CD4-positive, alpha-beta T cell (primary cell): ENCODE measurements at regions of chr21 and their contacts with region 1.

Region 1: GRCh38 chr21:29477941-29478340 is 179.2 kb downstream of the BACH1 start:
- DNase-seq: no peak
- ATAC-seq: no peak
- H3K4me3 ChIP-seq: no peak overlapping the region
- H3K4me3 Mint-ChIP-seq: no peak overlapping the region
- H3K27ac ChIP-seq: no peak overlapping the region
- H3K27ac Mint-ChIP-seq: no peak overlapping the region
- H3K4me1 ChIP-seq: peaks cover 3% of the 10 kb centered on the region
- H3K4me1 Mint-ChIP-seq: peaks cover 31% of the 10 kb centered on the region
- H3K27me3 ChIP-seq: no peaks in the 10 kb centered on the region
- H3K27me3 Mint-ChIP-seq: no peaks in the 10 kb centered on the region
- CTCF ChIP-seq: no peak

Region 2: DNA sequence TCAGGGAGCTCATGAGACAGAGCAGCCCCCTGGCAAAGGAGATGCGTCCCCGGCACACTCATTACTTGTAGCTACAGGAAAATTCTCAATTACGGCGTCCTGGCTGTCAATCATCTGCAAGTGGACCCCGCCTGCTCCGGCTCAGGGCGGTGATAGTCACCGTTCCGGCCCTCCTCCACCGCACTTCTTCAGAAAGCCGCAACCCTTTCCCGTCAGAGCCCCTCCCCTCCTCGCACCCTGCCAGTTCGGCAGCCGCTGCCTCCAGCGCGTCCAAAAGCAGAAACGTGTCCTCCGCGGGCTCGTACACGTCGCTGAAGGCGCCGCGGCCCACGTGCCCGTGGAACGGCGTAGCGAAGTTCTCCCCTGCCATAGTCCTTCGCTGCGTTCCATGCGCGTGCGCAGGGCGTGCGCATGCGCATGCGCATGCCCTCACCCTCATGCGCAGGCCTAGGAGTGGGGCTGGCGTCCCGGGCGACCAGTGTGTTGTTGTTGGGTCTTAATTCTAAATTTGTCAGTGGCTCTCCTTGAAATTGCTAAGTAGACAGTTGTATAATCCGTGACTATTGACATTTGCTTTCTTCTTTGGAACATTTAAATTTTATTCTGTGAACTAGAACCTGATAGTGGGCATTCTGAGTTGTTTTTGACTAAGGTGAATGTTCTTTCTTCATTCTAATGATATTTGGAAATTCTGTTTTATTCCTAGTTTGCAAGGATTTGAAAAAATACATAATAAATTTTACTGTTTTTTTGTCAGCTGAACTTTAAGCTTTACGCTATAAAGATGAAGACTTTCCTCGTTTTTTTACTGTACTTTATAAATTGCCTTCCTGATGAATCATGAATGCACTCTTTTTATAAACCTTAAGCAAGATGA is 592.7 kb before region 1 on chr21:
- CTCF ChIA-PET with region 1: no interaction called
- POLR2A ChIA-PET with region 1: no interaction called
- intact Hi-C with region 1: loop called in 1 of 2 experiments (anchors 5 kb)
- DNase-seq: peak; percentile 81 to 98 (median 90)
- ATAC-seq: peak; percentile 94
- H3K4me3 ChIP-seq: peak overlapping the region; percentile 62
- H3K4me3 Mint-ChIP-seq: peak overlapping the region; percentile 93
- H3K27ac ChIP-seq: peak overlapping the region; percentile 88 to 91
- H3K27ac Mint-ChIP-seq: peak overlapping the region; percentile 97
- H3K4me1 ChIP-seq: peaks cover 11% of the 10 kb centered on the region
- H3K4me1 Mint-ChIP-seq: peaks cover 23% of the 10 kb centered on the region
- H3K27me3 ChIP-seq: no peaks in the 10 kb centered on the region
- H3K27me3 Mint-ChIP-seq: no peaks in the 10 kb centered on the region
- CTCF ChIP-seq: no peak

Region 3: DNA sequence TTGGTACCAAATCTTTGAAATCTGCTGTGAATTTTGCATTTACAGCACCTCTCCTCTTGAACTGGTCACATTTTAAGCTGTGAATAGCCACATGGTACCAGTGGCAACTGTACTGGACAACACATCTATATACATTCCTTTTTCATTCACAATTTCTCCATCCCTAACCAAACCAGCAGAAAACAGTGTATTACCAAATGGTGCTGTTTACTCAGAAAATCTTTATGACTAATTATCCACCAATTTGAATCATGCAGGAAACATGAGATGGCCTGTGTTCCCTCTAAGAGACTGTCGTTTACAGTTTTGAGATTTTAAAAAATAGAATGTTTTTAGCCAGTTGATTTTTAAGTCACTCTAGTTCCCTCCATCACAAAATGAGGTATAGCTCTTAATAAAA is 386.9 kb before region 1 on chr21:
- CTCF ChIA-PET with region 1: no interaction called
- POLR2A ChIA-PET with region 1: no interaction called
- intact Hi-C with region 1: loop called in 1 of 2 experiments (anchors 10 kb)
- DNase-seq: no peak
- ATAC-seq: no peak
- H3K4me3 ChIP-seq: no peak overlapping the region
- H3K4me3 Mint-ChIP-seq: no peak overlapping the region
- H3K27ac ChIP-seq: no peak overlapping the region
- H3K27ac Mint-ChIP-seq: no peak overlapping the region
- H3K4me1 ChIP-seq: no peaks in the 10 kb centered on the region
- H3K4me1 Mint-ChIP-seq: no peaks in the 10 kb centered on the region
- H3K27me3 ChIP-seq: no peaks in the 10 kb centered on the region
- H3K27me3 Mint-ChIP-seq: no peaks in the 10 kb centered on the region
- CTCF ChIP-seq: no peak

Region 4: GRCh38 chr21:29418813-29419212 is 59.1 kb before region 1 on chr21:
- CTCF ChIA-PET with region 1: no interaction called
- POLR2A ChIA-PET with region 1: no interaction called
- intact Hi-C with region 1: loop called in 1 of 2 experiments (anchors 5 kb)
- DNase-seq: no peak
- ATAC-seq: no peak
- H3K4me3 ChIP-seq: no peak overlapping the region
- H3K4me3 Mint-ChIP-seq: no peak overlapping the region
- H3K27ac ChIP-seq: no peak overlapping the region
- H3K27ac Mint-ChIP-seq: peak overlapping the region; percentile 6
- H3K4me1 ChIP-seq: no peaks in the 10 kb centered on the region
- H3K4me1 Mint-ChIP-seq: peaks cover 9% of the 10 kb centered on the region
- H3K27me3 ChIP-seq: no peaks in the 10 kb centered on the region
- H3K27me3 Mint-ChIP-seq: no peaks in the 10 kb centered on the region
- CTCF ChIP-seq: no peak

Region 5: DNA sequence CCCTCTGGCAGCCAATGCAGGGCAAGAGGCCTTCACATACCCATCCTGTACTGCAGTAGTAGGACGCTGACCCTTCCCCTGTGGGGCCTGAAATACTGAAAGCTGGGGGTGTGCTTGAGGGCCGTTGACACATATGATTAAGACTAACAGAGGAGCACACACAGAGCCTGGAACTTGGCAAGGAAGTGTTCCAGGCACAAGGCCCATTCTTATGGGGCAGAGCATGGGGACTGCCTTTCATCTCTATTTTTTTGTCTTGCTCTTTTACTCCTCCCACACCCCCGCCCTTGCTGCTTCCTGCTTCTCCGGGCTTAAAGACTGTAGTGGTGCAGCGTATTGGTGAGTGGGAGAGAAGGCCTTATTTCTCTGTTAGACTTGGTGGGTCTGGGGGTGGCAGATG is 41.8 kb before region 1 on chr21:
- CTCF ChIA-PET with region 1: no interaction called
- POLR2A ChIA-PET with region 1: interaction called, 3 read pairs
- intact Hi-C with region 1: loop called in 1 of 2 experiments (anchors 5 kb)
- DNase-seq: peak in 13 of 14 experiments; percentile 23 to 71 (median 47)
- ATAC-seq: peak; percentile 94
- H3K4me3 ChIP-seq: peak overlapping the region; percentile 44
- H3K4me3 Mint-ChIP-seq: peak overlapping the region; percentile 76
- H3K27ac ChIP-seq: peak overlapping the region; percentile 37 to 41
- H3K27ac Mint-ChIP-seq: peak overlapping the region; percentile 83
- H3K4me1 ChIP-seq: peaks cover 16% of the 10 kb centered on the region
- H3K4me1 Mint-ChIP-seq: peaks cover 57% of the 10 kb centered on the region
- H3K27me3 ChIP-seq: no peaks in the 10 kb centered on the region
- H3K27me3 Mint-ChIP-seq: no peaks in the 10 kb centered on the region
- CTCF ChIP-seq: no peak

Region 6: GRCh38 chr21:29449306-29449950 is 28.5 kb before region 1 on chr21:
- CTCF ChIA-PET with region 1: no interaction called
- POLR2A ChIA-PET with region 1: interaction called, 22 read pairs
- intact Hi-C with region 1: no loop called
- DNase-seq: peak in 5 of 14 experiments; percentile 11 to 87 (median 63)
- ATAC-seq: peak; percentile 86
- H3K4me3 ChIP-seq: peak overlapping the region; percentile 1
- H3K4me3 Mint-ChIP-seq: peak overlapping the region; percentile 39
- H3K27ac ChIP-seq: peak overlapping the region; percentile 56 to 67
- H3K27ac Mint-ChIP-seq: peak overlapping the region; percentile 94
- H3K4me1 ChIP-seq: peaks cover 14% of the 10 kb centered on the region
- H3K4me1 Mint-ChIP-seq: peaks cover 40% of the 10 kb centered on the region
- H3K27me3 ChIP-seq: no peaks in the 10 kb centered on the region
- H3K27me3 Mint-ChIP-seq: no peaks in the 10 kb centered on the region
- CTCF ChIP-seq: peak; percentile 15

Region 7: DNA sequence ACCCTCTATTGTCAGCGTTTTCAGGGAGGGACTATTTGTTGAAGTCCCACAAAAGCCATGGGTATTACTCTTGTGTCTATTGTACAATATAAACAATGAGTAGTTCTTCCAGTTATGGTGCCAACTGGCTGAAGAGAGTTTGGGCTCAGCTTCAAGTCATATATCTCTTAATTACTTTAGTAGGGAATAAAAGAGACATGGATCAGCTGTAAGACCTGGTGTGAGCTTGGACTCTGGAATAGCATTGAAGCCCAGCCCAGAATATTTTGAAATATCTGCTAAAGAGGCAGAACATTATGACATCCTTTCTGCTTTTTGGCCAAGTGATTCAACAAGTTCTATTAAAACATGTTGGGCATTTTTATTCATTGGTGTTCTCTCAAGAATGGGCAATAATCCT is 45.7 kb after region 1 on chr21:
- CTCF ChIA-PET with region 1: no interaction called
- POLR2A ChIA-PET with region 1: no interaction called
- intact Hi-C with region 1: no loop called
- DNase-seq: no peak
- ATAC-seq: no peak
- H3K4me3 ChIP-seq: no peak overlapping the region
- H3K4me3 Mint-ChIP-seq: no peak overlapping the region
- H3K27ac ChIP-seq: no peak overlapping the region
- H3K27ac Mint-ChIP-seq: no peak overlapping the region
- H3K4me1 ChIP-seq: no peaks in the 10 kb centered on the region
- H3K4me1 Mint-ChIP-seq: no peaks in the 10 kb centered on the region
- H3K27me3 ChIP-seq: no peaks in the 10 kb centered on the region
- H3K27me3 Mint-ChIP-seq: no peaks in the 10 kb centered on the region
- CTCF ChIP-seq: no peak

Region 8: GRCh38 chr21:29849735-29850176 is 371.8 kb after region 1 on chr21:
- CTCF ChIA-PET with region 1: no interaction called
- POLR2A ChIA-PET with region 1: no interaction called
- intact Hi-C with region 1: loop called (anchors 2 kb)
- DNase-seq: peak in 13 of 14 experiments; percentile 2 to 62 (median 14)
- ATAC-seq: peak; percentile 90
- H3K4me3 ChIP-seq: no peak overlapping the region
- H3K4me3 Mint-ChIP-seq: no peak overlapping the region
- H3K27ac ChIP-seq: no peak overlapping the region
- H3K27ac Mint-ChIP-seq: no peak overlapping the region
- H3K4me1 ChIP-seq: no peaks in the 10 kb centered on the region
- H3K4me1 Mint-ChIP-seq: no peaks in the 10 kb centered on the region
- H3K27me3 ChIP-seq: no peaks in the 10 kb centered on the region
- H3K27me3 Mint-ChIP-seq: peaks cover 27% of the 10 kb centered on the region
- CTCF ChIP-seq: peak; percentile 73